Activated naive CD4-positive, alpha-beta T cell treated with anti-CD3 and anti-CD28 coated beads for 36 hours (primary cell): ENCODE measurements at regions of chr5 and their contacts with region 1.

Region 1: DNA sequence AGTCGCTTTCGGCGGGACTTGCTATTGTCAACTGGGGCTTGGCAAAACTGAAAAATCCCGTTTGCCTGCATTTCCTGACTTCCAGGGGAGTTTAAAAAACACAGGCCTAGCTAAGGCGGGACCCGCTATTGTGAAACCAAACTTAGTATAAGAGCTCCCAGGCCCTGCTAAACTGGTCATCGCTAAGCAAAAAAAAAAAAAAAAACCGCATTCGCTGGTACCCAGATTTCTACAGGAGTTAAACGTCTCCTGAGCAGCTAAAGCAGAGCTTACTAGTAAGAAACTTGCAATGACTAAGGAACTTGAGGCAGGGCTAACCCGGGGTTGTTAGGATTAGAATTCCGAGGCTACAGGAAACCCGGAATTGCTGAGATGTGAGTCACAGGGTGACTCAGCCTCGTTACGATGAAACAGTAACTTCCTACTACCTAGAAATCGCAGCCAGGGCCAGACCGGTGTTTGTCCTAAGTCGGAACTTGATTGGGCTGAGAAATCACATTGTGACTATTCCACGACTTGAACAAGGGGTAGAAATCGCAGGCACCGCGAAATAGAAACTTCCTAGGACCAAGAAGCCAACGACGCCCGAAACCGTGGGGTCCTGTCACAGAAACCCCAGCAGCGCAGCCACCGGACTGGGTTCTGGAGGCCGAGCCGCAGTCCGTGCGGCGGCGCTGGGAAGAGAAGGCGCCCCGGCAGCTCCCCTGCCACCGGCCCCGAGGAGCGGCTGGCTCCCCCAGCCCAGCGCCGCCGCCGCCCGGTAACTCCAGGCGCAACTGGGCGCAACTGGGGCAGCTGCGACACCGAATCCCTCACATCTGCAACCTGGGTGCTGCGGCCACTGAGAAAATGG is 89.5 kb downstream of the ANXA2R start:
- DNase-seq: peak; percentile 83
- H3K4me3 Mint-ChIP-seq: peak overlapping the region; percentile 87
- H3K27ac Mint-ChIP-seq: peak overlapping the region; percentile 88
- H3K4me1 Mint-ChIP-seq: peaks cover 9% of the 10 kb centered on the region
- H3K27me3 Mint-ChIP-seq: no peaks in the 10 kb centered on the region

Region 2: DNA sequence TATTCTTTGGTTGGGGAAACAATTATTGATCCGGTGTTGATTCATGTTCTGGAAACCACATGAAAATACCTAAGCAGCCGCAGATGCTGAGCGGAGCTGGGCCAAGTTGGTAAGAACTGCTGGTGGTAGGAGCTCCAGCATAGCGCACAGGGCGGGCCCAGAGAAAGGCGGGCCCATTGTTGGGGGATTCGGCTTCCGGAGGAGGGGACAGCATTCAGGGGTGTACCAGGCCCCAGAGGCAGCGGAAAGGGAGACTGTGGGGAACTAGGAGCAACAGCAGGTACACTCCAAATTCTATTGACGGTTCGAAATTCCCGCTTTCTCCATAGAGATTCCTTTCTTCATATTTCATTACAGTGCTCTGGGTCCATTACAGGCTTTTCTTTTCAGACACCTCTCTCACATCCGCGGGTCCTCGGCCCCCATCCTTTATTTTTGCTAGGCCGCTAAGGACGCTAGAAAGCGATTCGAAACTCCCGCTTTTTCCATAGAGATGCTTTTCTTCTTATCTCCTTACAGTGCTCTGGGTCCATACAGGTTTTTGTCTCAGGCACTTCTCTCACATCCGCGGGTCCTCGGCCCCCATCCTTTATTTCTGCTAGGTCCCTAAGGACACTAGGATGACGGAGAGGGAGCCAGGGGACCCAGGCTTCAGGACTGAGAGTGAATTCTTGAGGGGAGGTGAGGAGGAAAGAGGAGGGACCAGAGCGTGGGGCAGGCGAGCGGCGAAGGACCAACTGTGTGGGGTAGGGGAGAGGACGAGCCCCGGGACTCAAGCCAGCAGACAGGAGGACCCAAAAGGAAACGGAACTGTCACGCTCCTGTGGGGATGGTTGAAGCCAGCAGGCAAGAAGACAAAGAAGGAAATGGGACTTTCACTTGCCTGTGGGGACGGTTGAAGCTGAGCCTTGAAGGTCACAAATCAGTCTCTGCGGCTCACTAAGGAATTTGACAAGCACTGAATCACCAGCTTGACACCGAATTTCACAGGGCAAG is 193.8 kb before region 1 on chr5 and contains the start of gene CCDC152:
- CTCF ChIA-PET with region 1: no interaction called
- intact Hi-C with region 1: loop called (anchors 5 kb)
- DNase-seq: peak; percentile 60
- H3K4me3 Mint-ChIP-seq: peak within 1 kb of the TSS; percentile 84
- H3K27ac Mint-ChIP-seq: peak within 1 kb of the TSS; percentile 80
- H3K4me1 Mint-ChIP-seq: peaks cover 9% of the 10 kb centered on the region
- H3K27me3 Mint-ChIP-seq: peaks cover 7% of the 10 kb centered on the region
- total RNA-seq, gene CCDC152: 7.9 to 8.1 TPM

Region 3: GRCh38 chr5:42930934-42931333 is 19.7 kb before region 1 on chr5:
- CTCF ChIA-PET with region 1: interaction called, 4 read pairs
- intact Hi-C with region 1: loop called (anchors 1 kb)
- DNase-seq: peak; percentile 12
- H3K4me3 Mint-ChIP-seq: no peak overlapping the region
- H3K27ac Mint-ChIP-seq: no peak overlapping the region
- H3K4me1 Mint-ChIP-seq: peaks cover 3% of the 10 kb centered on the region
- H3K27me3 Mint-ChIP-seq: no peaks in the 10 kb centered on the region

Region 4: DNA sequence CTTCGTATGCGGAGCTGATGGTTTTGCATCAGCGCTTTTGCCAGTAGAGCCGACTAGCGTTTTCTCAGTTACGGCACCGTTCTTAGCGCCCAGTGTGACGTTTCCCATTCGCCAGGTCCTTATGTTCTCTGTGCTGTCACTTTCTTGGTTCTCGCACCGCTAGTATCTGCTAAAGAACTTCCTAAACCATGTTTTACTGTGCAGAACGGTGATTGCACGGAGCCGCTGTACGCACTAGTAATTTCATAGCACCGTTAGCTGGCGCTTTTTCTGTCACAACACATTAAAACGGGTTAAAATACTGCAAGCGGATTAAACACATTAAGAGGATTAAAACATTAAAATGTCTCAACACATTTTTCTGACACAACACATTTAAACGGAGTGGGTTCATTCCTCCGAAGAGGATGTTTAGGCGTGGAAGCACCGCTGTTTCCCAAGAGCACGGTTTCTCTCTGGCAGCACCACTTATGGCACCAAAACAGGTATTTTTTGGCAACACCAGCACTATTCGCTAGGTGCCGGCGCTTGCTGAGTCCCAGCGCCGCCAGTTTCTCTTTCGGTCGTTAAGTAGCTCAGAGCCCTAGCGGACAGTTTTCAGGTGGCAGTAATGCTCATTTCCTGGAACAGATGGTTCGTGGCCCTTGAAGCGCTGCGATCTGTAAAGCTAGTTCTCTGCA is 69.1 kb after region 1 on chr5:
- CTCF ChIA-PET with region 1: interaction called, 7 read pairs
- intact Hi-C with region 1: loop called (anchors 1 kb)
- DNase-seq: peak; percentile 90
- H3K4me3 Mint-ChIP-seq: peak overlapping the region; percentile 97
- H3K27ac Mint-ChIP-seq: peak overlapping the region; percentile 99
- H3K4me1 Mint-ChIP-seq: peaks cover 37% of the 10 kb centered on the region
- H3K27me3 Mint-ChIP-seq: no peaks in the 10 kb centered on the region

Region 5: GRCh38 chr5:43305948-43306565 is 355.4 kb after region 1 on chr5:
- CTCF ChIA-PET with region 1: no interaction called
- intact Hi-C with region 1: loop called (anchors 2 kb)
- DNase-seq: no peak
- H3K4me3 Mint-ChIP-seq: no peak overlapping the region
- H3K27ac Mint-ChIP-seq: peak overlapping the region; percentile 75
- H3K4me1 Mint-ChIP-seq: peaks cover 80% of the 10 kb centered on the region
- H3K27me3 Mint-ChIP-seq: no peaks in the 10 kb centered on the region